ENCODE measurements at regions of chr9 and their contacts with region 1.

Region 1: GRCh38 chr9:38451162-38451561 is 26.9 kb upstream of the IGFBPL1 start:
- DNase-seq: no peak
- H3K4me3 ChIP-seq: no peak overlapping the region
- H3K27ac ChIP-seq: no peak overlapping the region
- H3K4me1 ChIP-seq: no peaks in the 10 kb centered on the region
- H3K27me3 ChIP-seq: peaks cover 3% of the 10 kb centered on the region
- CTCF ChIP-seq: no peak

Region 2: DNA sequence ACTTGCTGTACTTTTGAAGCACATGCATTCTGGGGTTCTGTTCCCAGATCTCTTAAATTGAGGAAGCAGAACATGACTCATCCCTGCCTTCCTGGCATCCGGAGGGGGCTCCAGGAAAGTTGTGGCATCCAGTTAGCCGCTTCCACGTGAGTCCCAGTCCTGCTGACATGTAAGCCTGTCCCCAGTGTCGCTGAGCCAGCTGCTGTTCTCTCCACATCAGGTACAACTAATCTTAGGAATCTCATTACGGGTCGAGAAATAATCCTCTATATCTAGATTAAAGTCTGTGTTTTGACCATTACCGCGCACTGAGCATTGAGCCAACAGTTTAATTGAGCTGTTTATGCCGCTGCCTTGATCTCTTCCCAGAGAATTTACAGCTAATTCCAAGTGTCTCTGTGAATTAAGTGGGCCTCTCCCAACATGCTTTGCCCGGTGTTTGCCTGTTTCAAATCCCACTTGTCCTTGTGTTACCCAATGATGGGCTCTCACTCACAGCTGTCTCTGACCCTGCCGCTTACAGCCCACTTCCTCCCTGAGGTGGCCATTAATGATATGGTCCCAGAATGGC is 371.6 kb before region 1 on chr9:
- CTCF ChIA-PET with region 1: no interaction called
- dilution Hi-C with region 1: loop called (anchors 5 kb)
- in situ Hi-C with region 1: no loop called
- intact Hi-C with region 1: no loop called
- DNase-seq: no peak
- H3K4me3 ChIP-seq: no peak overlapping the region
- H3K27ac ChIP-seq: no peak overlapping the region
- H3K4me1 ChIP-seq: peaks cover 3% of the 10 kb centered on the region
- H3K27me3 ChIP-seq: no peaks in the 10 kb centered on the region
- CTCF ChIP-seq: no peak

Region 3: GRCh38 chr9:38182321-38182720 is 268.8 kb before region 1 on chr9:
- CTCF ChIA-PET with region 1: no interaction called
- dilution Hi-C with region 1: no loop called
- in situ Hi-C with region 1: no loop called
- intact Hi-C with region 1: no loop called
- DNase-seq: peak; percentile 11
- H3K4me3 ChIP-seq: no peak overlapping the region
- H3K27ac ChIP-seq: no peak overlapping the region
- H3K4me1 ChIP-seq: peaks cover 20% of the 10 kb centered on the region
- H3K27me3 ChIP-seq: no peaks in the 10 kb centered on the region
- CTCF ChIP-seq: no peak

Region 4: DNA sequence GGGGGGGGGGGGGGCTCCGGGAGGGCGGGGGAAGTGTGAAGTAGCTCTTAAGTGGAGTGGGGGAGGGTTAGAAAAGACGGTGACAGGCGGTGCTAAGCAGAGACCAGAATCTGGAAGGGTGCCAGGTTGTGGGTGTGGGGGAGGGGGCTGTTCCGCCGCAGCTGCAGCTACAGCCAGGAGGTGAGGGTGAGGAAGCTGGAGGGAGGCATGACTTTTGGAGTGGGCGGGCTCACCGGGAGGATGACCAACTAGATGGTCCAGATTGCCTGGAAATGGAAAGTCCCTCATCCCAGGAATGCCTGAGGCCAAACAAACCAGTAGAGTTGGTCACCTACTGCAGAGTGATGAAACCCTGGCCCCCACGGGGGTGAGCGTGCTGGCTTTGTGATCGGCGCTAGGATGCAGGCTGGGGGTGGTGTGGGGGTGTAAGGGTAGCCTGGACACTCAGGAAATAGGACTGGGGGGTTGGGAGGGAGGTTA is 224.1 kb before region 1 on chr9:
- CTCF ChIA-PET with region 1: no interaction called
- dilution Hi-C with region 1: no loop called
- in situ Hi-C with region 1: no loop called
- intact Hi-C with region 1: no loop called
- DNase-seq: peak; percentile 95
- H3K4me3 ChIP-seq: no peak overlapping the region
- H3K27ac ChIP-seq: no peak overlapping the region
- H3K4me1 ChIP-seq: peaks cover 7% of the 10 kb centered on the region
- H3K27me3 ChIP-seq: no peaks in the 10 kb centered on the region
- CTCF ChIP-seq: no peak

Region 5: GRCh38 chr9:38339087-38339486 is 112.1 kb before region 1 on chr9:
- CTCF ChIA-PET with region 1: no interaction called
- dilution Hi-C with region 1: no loop called
- in situ Hi-C with region 1: no loop called
- intact Hi-C with region 1: no loop called
- DNase-seq: peak; percentile 60
- H3K4me3 ChIP-seq: no peak overlapping the region
- H3K27ac ChIP-seq: no peak overlapping the region
- H3K4me1 ChIP-seq: peaks cover 4% of the 10 kb centered on the region
- H3K27me3 ChIP-seq: no peaks in the 10 kb centered on the region
- CTCF ChIP-seq: no peak

Region 6: DNA sequence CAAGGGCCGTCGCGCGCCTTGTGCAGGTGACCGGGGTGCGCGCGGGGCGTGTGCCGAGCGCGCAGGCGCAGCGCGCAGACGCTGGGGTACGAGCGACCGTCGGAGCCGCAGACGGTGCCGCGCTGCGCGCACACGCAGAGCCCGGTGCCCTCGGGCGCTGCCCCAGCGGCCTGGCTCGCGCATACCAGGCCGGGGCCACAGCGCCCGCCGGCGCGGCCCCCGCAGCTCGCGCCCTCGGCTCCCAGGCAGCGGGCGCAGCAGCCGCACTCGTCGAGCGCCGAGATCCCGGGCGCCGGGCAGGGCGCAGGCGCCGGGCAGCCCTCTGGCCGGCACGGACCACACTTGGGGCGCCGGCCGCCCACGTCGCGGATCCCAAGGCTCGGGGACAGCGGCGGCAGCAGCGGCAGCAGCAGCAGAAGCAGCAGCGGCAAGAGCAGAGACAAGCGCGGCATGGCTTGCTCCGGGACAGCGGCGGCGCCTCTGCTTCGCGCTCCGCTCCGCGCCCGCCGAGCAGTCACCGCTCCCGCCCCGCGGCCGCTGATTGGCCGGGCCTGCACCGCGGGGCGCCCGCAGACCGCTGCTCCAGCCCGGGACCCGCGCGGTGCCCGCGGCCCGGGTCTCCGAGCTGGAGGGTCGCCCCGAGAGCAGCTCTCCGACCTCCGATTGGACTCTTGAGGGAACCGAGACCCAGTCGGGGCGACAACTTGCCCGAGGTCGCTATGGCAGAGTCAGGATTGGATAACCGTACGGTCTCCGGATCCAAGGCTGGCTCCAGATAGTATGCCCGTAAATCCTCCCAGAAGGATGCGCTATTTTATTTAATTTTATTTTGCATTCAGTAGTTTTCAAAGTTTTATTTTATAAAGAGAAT is 27.0 kb before region 1 on chr9 and contains the start of gene IGFBPL1:
- CTCF ChIA-PET with region 1: no interaction called
- dilution Hi-C with region 1: loop called (anchors 5 kb)
- in situ Hi-C with region 1: no loop called
- intact Hi-C with region 1: no loop called
- DNase-seq: peak; percentile 17
- H3K4me3 ChIP-seq: peak within 1 kb of the TSS in 2 of 3 experiments; percentile 18 to 35
- H3K27ac ChIP-seq: no peak within 1 kb of the TSS
- H3K4me1 ChIP-seq: peaks cover 5% of the 10 kb centered on the region
- H3K27me3 ChIP-seq: peaks cover 21% of the 10 kb centered on the region
- CTCF ChIP-seq: no peak
- total RNA-seq, gene IGFBPL1: not detected